MCF 10A (cell line): ENCODE measurements at regions of chr17 and their contacts with region 1.

Region 1: DNA sequence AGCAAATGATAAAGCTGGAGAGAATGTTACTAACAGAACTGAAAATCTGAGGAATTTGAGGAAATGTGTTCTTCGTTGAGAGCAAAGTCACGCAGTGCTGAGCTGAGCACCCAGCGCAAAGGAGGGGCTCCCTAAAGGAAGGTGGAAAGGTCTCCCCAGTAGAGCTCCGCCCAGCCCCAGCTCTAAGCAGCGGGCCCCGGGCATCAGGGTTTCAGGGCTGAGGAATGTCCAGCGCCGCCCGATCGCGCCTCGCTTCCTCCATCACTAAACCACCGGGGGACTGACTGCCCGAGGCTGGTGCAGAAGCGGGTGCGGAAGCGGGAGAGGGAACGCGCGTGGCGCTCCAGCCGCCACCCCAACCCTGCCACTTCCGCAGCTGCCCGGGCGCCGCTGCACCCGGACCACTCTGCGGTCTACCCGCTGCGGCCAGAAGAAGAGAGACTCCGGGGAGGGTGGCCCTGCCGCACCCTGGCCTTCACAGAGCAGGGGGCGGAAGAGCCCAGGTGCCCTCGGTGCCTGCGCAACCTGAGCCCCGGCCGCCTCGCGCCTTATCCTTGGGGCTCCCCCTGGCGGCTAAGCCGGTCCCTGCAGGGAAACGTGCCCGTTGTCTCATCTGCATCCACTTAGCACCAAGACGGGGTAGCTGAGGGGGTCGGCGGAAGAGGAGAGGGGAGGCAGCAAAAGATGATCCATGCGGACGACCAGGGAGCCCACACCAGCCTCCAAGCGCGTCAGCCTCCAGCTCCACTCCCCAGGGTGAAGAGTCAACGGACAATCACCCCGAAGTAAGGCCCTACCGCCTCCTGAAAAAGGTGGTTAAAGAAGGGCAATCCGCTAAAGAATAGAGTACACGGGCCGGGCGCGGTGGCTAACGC is 12.4 kb upstream of the GUCY2D start:
- DNase-seq: peak; percentile 80
- H3K4me3 Mint-ChIP-seq: peak overlapping the region; percentile 63
- H3K27ac Mint-ChIP-seq: no peak overlapping the region
- H3K4me1 Mint-ChIP-seq: peaks cover 13% of the 10 kb centered on the region
- H3K27me3 Mint-ChIP-seq: no peaks in the 10 kb centered on the region
- CTCF ChIP-seq: peak; percentile 91

Region 2: GRCh38 chr17:7745748-7746470 is 244.1 kb before region 1 on chr17:
- CTCF ChIA-PET with region 1: interaction called, 27 read pairs
- POLR2A ChIA-PET with region 1: interaction called, 3 read pairs
- intact Hi-C with region 1: loop called (anchors 2 kb)
- DNase-seq: peak; percentile 95
- H3K4me3 Mint-ChIP-seq: no peak overlapping the region
- H3K27ac Mint-ChIP-seq: no peak overlapping the region
- H3K4me1 Mint-ChIP-seq: peaks cover 11% of the 10 kb centered on the region
- H3K27me3 Mint-ChIP-seq: peaks cover 3% of the 10 kb centered on the region
- CTCF ChIP-seq: no peak

Region 3: DNA sequence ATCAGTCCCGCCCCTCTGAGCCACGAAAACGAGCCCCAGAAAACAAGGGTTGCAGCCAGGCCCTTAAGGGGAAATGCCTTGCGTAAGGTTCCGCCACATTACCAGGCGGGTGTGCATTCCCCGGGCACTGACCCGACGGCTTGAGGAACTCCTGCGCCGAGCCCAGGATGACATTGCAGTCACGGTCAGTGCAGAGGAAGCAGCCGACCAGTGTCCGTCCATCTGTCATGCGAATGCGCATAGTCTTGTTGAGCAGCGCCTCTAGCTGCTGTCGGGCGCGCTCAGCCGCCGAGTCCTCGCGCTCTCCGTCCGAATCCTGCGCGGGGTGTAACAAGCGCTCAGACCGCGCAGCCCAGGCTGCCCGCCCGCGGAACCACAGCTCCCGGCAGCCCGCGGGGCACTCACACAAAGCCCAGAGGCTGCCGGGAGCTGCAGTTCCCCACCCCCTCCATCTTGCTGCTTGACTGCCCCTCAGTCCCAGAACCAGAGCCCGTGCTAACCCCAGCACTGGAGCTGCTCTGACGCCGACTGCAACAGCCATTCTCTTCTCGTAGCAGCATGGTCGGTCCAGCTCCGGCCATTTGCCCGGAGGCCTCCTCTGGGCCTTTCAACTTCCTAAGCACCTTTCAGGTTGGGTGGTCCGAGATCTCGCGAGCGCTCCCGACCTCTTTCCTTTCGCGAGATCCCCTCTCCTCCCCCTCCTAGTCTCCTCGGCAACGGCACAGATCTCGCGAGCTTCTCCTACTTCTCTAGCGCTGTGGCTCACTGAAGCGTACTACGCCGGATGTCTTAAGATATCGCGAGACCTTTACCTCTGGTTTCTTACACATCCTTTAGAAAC is 132.9 kb before region 1 on chr17 and contains the start of gene NAA38:
- CTCF ChIA-PET with region 1: interaction called, 70 read pairs
- POLR2A ChIA-PET with region 1: interaction called, 11 read pairs
- intact Hi-C with region 1: loop called (anchors 1 kb)
- DNase-seq: peak; percentile 99
- H3K4me3 Mint-ChIP-seq: no peak within 1 kb of the TSS
- H3K27ac Mint-ChIP-seq: no peak within 1 kb of the TSS
- H3K4me1 Mint-ChIP-seq: peaks cover 7% of the 10 kb centered on the region
- H3K27me3 Mint-ChIP-seq: no peaks in the 10 kb centered on the region
- CTCF ChIP-seq: peak; percentile 22
- total RNA-seq, gene NAA38: 70.2 and 83.4 TPM in 2 replicates

Region 4: GRCh38 chr17:7915611-7916382 is 74.2 kb before region 1 on chr17 and contains the start of gene RNF227:
- CTCF ChIA-PET with region 1: interaction called, 145 read pairs
- POLR2A ChIA-PET with region 1: interaction called, 11 read pairs
- intact Hi-C with region 1: loop called (anchors 1 kb)
- DNase-seq: peak; percentile 97
- H3K4me3 Mint-ChIP-seq: peak within 1 kb of the TSS; percentile 93
- H3K27ac Mint-ChIP-seq: peak within 1 kb of the TSS; percentile 95
- H3K4me1 Mint-ChIP-seq: peaks cover 26% of the 10 kb centered on the region
- H3K27me3 Mint-ChIP-seq: no peaks in the 10 kb centered on the region
- CTCF ChIP-seq: no peak
- total RNA-seq, gene RNF227: 5.6 and 7.4 TPM in 2 replicates

Region 5: DNA sequence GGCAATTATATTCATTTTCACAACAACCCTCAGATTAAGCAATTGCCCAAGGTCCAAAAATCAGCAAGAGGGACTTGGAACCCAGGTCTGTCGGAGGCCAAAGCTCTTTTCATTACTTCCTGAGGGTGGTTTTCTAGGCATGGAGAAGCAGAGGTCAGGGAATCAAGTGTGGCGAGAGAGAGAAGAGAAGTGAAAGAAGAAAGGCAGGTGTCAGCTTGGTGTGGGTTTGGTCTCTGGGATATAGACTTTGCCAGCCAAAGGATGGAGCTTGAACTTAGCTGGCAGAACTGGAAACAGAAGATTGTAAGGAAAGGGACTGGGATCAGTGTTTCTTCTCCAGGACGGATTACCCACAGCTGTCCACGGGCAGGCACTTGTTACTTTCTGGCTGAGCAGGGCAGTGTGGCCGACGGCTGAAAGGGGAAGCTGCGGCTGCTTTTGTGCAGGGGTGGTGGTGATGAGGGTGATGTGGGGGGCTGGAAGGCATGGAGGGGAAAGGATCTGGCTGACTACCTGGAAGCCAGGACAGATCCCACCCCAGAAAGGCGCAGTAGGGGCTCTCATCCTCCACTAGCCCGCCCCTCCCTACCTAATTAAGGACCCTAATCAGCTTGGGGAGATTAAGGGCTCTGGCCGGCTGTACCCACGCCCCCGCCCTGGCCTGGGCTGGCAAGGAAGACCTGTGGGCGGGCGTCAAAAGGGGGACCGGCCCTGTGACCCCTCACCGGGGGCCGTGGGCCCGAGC is 12.1 kb after region 1 on chr17 and contains the start of gene GUCY2D:
- CTCF ChIA-PET with region 1: interaction called, 10 read pairs
- POLR2A ChIA-PET with region 1: interaction called, 4 read pairs
- intact Hi-C with region 1: no loop called
- DNase-seq: no peak
- H3K4me3 Mint-ChIP-seq: no peak within 1 kb of the TSS
- H3K27ac Mint-ChIP-seq: no peak within 1 kb of the TSS
- H3K4me1 Mint-ChIP-seq: peaks cover 16% of the 10 kb centered on the region
- H3K27me3 Mint-ChIP-seq: peaks cover 13% of the 10 kb centered on the region
- CTCF ChIP-seq: no peak
- total RNA-seq, gene GUCY2D: not detected in 2 replicates

Region 6: GRCh38 chr17:8143764-8144719 is 154.0 kb after region 1 on chr17:
- CTCF ChIA-PET with region 1: no interaction called
- POLR2A ChIA-PET with region 1: no interaction called
- intact Hi-C with region 1: no loop called
- DNase-seq: no peak
- H3K4me3 Mint-ChIP-seq: no peak overlapping the region
- H3K27ac Mint-ChIP-seq: peak overlapping the region; percentile 35
- H3K4me1 Mint-ChIP-seq: peaks cover 17% of the 10 kb centered on the region
- H3K27me3 Mint-ChIP-seq: no peaks in the 10 kb centered on the region
- CTCF ChIP-seq: no peak

Region 7: GRCh38 chr17:8189711-8190477 is 199.9 kb after region 1 on chr17 and contains the start of gene BORCS6:
- CTCF ChIA-PET with region 1: no interaction called
- POLR2A ChIA-PET with region 1: no interaction called
- intact Hi-C with region 1: no loop called
- DNase-seq: peak; percentile 99
- H3K4me3 Mint-ChIP-seq: no peak within 1 kb of the TSS
- H3K27ac Mint-ChIP-seq: peak within 1 kb of the TSS; percentile 59
- H3K4me1 Mint-ChIP-seq: no peaks in the 10 kb centered on the region
- H3K27me3 Mint-ChIP-seq: no peaks in the 10 kb centered on the region
- CTCF ChIP-seq: no peak
- total RNA-seq, gene BORCS6: 3.9 and 4.4 TPM in 2 replicates